Caco-2 (cell line): ENCODE measurements at regions of chr14 and their contacts with region 1.

Region 1: GRCh38 chr14:76810953-76811400 is 1.7 kb downstream of the ANGEL1 start:
- DNase-seq: peak; percentile 44 to 46
- H3K4me3 ChIP-seq: peak overlapping the region; percentile 81; the same call in 1 of the 2 replicates
- H3K4me3 Mint-ChIP-seq: peak overlapping the region; percentile 94
- H3K27ac Mint-ChIP-seq: peak overlapping the region; percentile 91
- H3K4me1 ChIP-seq: peaks cover 5% of the 10 kb centered on the region
- H3K4me1 Mint-ChIP-seq: peaks cover 8% of the 10 kb centered on the region
- H3K27me3 ChIP-seq: no peaks in the 10 kb centered on the region
- H3K27me3 Mint-ChIP-seq: no peaks in the 10 kb centered on the region
- CTCF ChIP-seq: peak; percentile 20 to 46

Region 2: DNA sequence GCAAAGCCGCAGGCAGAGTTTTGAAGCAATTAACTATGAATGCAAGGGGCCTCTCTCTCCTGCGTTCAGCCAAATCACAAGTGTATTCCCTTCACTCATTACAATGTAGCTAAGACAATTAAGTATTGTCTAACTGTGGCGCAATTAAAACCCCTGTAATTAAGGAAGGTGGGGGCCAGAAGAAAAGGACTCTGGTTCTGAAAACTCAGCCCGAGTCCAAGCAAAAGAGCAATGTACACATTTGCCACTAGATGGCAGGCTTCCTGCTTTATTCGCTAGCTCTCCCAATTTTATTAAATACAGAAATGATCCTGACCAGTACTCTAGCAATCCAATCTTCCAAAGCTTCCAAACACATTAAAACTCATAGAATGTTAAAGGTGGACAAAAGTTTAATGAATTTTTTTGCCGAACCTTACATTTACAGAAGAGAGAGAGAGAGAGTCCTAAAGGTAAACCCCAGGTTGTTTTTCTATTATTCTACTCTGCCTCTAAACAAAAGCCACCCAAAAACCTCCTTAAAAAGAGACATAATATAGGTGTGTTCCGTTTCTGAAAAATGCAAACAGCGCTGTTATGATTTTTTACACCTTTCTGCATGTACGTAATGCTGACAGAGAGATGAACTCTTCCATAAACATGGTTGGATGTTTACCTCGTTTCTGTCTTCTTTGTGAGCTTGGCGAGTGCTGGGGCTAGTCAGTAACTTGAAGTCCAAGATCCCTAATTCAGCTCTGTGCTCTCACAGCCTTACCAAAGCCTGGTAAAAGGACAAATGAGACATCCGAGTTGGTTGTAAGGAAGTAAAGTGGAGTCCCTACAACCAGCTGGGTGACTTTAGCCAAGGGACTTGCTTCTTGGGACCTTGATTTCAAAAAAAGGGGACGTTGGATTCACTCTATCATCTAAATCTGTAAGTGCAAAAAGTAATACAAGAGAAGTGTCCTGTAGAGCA is 100.6 kb before region 1 on chr14:
- CTCF ChIA-PET with region 1: interaction called, 5 read pairs
- POLR2A ChIA-PET with region 1: no interaction called
- intact Hi-C with region 1: loop called (anchors 1 kb)
- DNase-seq: peak in 1 of 2 experiments; percentile 26
- H3K4me3 ChIP-seq: no peak overlapping the region
- H3K4me3 Mint-ChIP-seq: no peak overlapping the region
- H3K27ac Mint-ChIP-seq: no peak overlapping the region
- H3K4me1 ChIP-seq: no peaks in the 10 kb centered on the region
- H3K4me1 Mint-ChIP-seq: no peaks in the 10 kb centered on the region
- H3K27me3 ChIP-seq: no peaks in the 10 kb centered on the region
- H3K27me3 Mint-ChIP-seq: peaks cover 9% of the 10 kb centered on the region
- CTCF ChIP-seq: peak; percentile 40 to 75

Region 3: DNA sequence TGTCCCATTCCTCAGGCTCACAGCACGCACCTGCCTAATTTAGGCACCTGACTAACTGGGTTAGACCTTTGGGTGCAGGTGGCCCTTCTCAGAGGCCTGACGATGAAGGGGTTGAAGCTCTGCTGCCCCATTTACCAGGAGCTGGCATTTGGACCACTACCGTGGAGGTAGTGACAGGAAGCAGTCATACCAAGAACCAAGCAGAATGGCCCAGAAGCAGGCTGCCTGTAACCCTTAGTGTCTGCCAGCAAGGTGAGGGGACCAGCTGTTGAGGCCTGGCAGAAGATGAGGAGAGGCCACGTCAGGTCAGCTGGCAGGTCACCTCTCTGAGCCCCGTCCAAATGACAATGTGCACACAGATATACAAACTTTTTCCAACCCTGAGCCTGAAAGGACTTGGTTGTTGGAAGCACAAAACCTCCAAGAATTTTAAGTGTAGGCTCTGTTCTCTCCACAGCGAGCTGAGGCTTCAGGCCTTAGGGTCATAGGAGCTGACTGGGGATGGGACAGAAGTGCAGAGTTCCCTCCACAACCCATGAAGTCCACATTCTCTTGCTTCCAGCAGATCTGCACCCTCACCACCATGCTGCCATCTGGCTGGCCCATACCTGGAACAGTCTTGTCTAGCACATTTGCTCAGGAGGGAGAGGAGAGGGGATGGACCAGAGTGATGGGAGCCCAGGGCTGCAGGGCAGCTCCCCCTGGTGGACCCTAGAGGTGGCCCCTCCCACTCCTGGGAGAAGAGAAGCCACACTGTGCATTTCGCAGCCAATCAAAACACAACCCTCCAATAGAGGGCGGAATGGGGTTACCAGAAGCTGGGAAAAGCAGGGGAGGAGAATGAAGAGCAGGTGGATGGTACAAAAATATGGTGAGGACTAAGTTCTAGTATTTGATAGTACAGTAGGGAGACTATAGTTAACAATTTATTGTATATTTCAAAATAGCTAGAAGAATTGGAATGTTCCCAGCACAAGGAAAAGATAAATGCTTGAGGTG is 26.4 kb before region 1 on chr14:
- CTCF ChIA-PET with region 1: interaction called, 10 read pairs
- POLR2A ChIA-PET with region 1: interaction called, 4 read pairs
- intact Hi-C with region 1: no loop called
- DNase-seq: peak; percentile 81 to 88
- H3K4me3 ChIP-seq: no peak overlapping the region
- H3K4me3 Mint-ChIP-seq: no peak overlapping the region
- H3K27ac Mint-ChIP-seq: no peak overlapping the region
- H3K4me1 ChIP-seq: no peaks in the 10 kb centered on the region
- H3K4me1 Mint-ChIP-seq: no peaks in the 10 kb centered on the region
- H3K27me3 ChIP-seq: no peaks in the 10 kb centered on the region
- H3K27me3 Mint-ChIP-seq: no peaks in the 10 kb centered on the region
- CTCF ChIP-seq: peak; percentile 84 to 95

Region 4: DNA sequence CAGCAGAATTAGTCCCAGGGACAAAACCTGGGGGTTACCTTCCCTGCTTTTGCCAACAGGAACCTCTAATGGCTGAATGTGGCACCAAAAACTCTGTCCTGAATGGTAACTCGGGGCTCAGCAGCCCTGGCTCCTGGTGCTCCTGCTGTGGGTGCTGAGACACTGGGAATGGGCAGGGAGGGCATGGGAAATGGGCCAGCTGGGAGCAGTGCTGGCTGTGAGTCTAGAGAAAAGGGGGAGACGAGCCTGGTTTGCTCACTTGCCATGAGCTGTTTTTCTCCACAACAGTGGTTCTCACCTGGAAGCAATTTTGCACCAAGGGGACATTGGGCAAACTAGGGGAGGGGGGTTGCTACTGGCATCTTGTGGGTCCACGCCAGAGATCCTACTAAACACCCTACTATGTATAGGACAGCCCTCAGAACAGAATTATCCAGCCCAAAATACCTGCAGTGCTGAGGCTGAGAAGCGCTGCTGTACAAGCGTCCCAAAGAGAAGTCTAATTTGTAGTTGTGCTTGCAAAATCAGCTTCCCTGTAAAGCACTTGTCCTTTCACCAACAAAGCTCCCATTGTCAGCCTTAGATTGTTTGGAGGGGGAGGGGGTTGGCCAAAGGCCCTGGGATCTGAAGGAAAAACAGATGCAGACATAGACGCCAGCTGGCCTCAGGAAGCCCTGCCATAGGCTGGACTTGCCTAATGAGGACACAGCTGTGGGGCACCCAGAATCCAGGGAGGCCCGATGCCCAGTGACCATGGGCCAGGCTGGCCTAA is 18.9 kb after region 1 on chr14:
- CTCF ChIA-PET with region 1: no interaction called
- POLR2A ChIA-PET with region 1: interaction called, 10 read pairs
- intact Hi-C with region 1: no loop called
- DNase-seq: no peak
- H3K4me3 ChIP-seq: no peak overlapping the region
- H3K4me3 Mint-ChIP-seq: no peak overlapping the region
- H3K27ac Mint-ChIP-seq: no peak overlapping the region
- H3K4me1 ChIP-seq: peaks cover 9% of the 10 kb centered on the region
- H3K4me1 Mint-ChIP-seq: peaks cover 9% of the 10 kb centered on the region
- H3K27me3 ChIP-seq: no peaks in the 10 kb centered on the region
- H3K27me3 Mint-ChIP-seq: peaks cover 6% of the 10 kb centered on the region
- CTCF ChIP-seq: no peak

Region 5: GRCh38 chr14:76882651-76883050 is 71.7 kb after region 1 on chr14:
- CTCF ChIA-PET with region 1: no interaction called
- POLR2A ChIA-PET with region 1: no interaction called
- intact Hi-C with region 1: no loop called
- DNase-seq: no peak
- H3K4me3 ChIP-seq: no peak overlapping the region
- H3K4me3 Mint-ChIP-seq: no peak overlapping the region
- H3K27ac Mint-ChIP-seq: no peak overlapping the region
- H3K4me1 ChIP-seq: no peaks in the 10 kb centered on the region
- H3K4me1 Mint-ChIP-seq: no peaks in the 10 kb centered on the region
- H3K27me3 ChIP-seq: no peaks in the 10 kb centered on the region
- H3K27me3 Mint-ChIP-seq: no peaks in the 10 kb centered on the region
- CTCF ChIP-seq: no peak